HEK293 (cell line): ENCODE measurements at regions of chr9 and their contacts with region 1.

Region 1: DNA sequence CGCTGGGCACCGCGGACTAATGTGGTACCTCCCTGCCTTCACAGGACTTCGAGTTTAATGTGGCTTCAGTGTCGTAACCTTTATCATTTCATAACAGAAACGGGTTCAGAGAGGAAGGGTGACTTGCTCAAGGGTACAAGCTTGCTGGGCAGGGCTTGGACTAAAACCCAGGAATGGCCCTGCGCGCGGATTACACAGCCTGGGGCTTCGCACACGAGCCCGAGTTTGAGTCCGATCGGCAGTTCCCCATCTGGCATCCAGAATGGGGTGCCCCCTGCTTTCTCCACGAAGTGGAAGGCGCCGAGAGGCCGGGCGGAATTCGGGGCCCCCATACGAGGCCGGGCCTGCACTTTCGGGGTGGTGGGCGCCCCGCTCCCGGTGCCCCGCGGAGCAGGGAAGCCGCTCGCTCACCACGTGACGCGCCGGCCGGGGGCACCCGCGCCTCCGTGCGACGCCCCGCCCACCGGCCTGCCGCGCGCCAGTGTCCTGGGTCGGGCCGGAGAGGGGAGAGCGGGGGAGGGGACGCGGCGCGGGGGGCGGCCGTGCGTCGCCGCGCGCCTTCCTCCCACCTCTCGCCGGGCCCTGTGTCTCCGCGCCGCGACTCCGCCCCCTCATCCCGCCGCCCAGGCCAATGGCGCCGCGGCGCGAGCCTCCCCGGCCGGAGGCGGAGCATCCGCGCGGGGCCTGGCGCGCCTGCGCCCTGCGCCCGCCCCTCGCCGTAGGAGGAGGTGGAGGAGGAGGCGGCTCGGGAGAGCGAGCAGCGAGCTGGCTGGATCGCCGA is at the start of gene SET:
- H3K4me3 ChIP-seq: peak within 1 kb of the TSS; percentile 85
- H3K27ac ChIP-seq: peak within 1 kb of the TSS; percentile 90
- H3K4me1 ChIP-seq: no peaks in the 10 kb centered on the region
- CTCF ChIP-seq: no peak

Region 2: DNA sequence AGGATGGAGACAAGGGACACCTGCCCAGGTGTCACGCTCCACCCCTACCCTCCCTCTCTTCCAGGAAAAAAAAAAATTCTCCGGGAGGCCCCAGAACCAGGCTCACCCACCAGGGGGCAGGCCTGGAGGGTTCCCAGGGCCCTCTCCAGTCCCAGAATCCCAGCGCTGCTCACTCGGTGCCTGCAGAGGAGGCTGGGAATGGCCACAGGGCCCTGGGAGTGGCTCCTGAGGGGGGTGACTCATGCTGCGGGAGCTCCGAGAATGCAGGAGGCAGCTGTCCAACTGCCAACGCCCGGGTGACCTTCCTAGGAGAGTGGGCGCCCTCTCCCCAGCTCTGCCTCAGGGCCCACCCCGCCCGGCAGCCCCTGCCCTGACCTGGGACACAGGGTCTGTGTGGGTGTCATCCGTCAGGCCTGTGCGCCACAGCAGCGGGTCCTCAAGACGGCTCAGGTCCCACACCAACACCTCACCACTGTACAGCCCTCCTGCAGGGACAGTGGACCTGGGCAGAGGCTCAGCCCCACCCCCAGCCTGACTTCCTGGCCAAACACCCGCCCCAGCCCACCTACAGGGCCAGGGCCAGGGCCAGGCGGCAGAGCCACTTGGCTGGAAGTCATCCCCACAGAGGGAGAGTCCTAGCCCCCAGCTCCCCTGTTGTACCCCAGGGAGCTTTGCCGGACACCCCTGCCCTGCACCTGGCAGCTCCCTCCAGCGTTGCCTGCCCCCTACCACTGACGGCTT is 53.2 kb before region 1 on chr9:
- CTCF ChIA-PET with region 1: interaction called, 7 read pairs
- POLR2A ChIA-PET with region 1: interaction called, 15 read pairs
- H3K4me3 ChIP-seq: peak overlapping the region; percentile 16; the same call in 1 of the 2 replicates
- H3K27ac ChIP-seq: peak overlapping the region; percentile 9; the same call in 1 of the 2 replicates
- H3K4me1 ChIP-seq: peaks cover 6% of the 10 kb centered on the region
- CTCF ChIP-seq: peak; percentile 91

Region 3: GRCh38 chr9:128669786-128670185 is 18.9 kb before region 1 on chr9:
- CTCF ChIA-PET with region 1: interaction called, 3 read pairs
- POLR2A ChIA-PET with region 1: interaction called, 13 read pairs
- H3K4me3 ChIP-seq: no peak overlapping the region
- H3K27ac ChIP-seq: no peak overlapping the region
- H3K4me1 ChIP-seq: no peaks in the 10 kb centered on the region
- CTCF ChIP-seq: no peak

Region 4: GRCh38 chr9:128702445-128702948 is 13.8 kb after region 1 on chr9 and contains the start of gene PKN3:
- CTCF ChIA-PET with region 1: interaction called, 37 read pairs
- POLR2A ChIA-PET with region 1: interaction called, 26 read pairs
- H3K4me3 ChIP-seq: peak within 1 kb of the TSS; percentile 79
- H3K27ac ChIP-seq: peak within 1 kb of the TSS; percentile 80
- H3K4me1 ChIP-seq: no peaks in the 10 kb centered on the region
- CTCF ChIP-seq: peak; percentile 94

Region 5: GRCh38 chr9:128742401-128742800 is 53.7 kb after region 1 on chr9:
- CTCF ChIA-PET with region 1: no interaction called
- POLR2A ChIA-PET with region 1: interaction called, 10 read pairs
- H3K4me3 ChIP-seq: no peak overlapping the region
- H3K27ac ChIP-seq: no peak overlapping the region
- H3K4me1 ChIP-seq: no peaks in the 10 kb centered on the region
- CTCF ChIP-seq: no peak